ENCODE measurements at regions of chr3 and their contacts with region 1.

Region 1: DNA sequence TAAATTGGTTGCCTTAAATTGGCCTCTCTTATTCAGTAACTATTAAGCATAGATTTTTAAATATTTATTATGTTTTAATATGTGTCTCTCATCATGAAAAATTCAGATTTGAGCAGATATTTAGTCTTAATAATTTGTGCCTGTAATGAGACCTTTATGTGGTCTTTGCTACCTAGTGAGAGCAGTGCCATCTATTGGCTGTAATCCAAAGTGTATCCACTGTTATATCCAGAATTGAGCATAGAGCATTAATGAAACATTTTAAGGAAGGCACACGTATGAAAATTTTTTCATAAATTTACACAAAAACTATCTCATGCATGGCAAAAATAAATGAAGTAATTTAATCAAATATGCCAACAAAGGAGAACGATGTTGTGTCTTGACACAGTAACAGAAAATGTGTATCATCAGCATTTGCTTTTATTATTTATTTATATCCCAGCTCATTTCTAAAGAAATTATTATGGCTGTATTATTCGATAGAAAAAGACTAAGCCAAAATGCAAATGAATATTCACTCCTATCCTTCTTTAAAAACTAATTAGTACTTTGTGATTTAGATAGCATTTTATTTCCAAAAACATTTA is 203.5 kb downstream of the RSRC1 start:
- DNase-seq: peak; percentile 39
- ATAC-seq: peak; percentile 65
- H3K4me3 ChIP-seq: no peak overlapping the region
- H3K27ac ChIP-seq: no peak overlapping the region
- H3K4me1 ChIP-seq: no peaks in the 10 kb centered on the region
- H3K27me3 ChIP-seq: no peaks in the 10 kb centered on the region
- CTCF ChIP-seq: peak; percentile 55 to 67 (median 56); a peak in 5 of 6 replicates
- POLR2A ChIP-seq: no peak
- RAD21 ChIP-seq: peak; percentile 82

Region 2: DNA sequence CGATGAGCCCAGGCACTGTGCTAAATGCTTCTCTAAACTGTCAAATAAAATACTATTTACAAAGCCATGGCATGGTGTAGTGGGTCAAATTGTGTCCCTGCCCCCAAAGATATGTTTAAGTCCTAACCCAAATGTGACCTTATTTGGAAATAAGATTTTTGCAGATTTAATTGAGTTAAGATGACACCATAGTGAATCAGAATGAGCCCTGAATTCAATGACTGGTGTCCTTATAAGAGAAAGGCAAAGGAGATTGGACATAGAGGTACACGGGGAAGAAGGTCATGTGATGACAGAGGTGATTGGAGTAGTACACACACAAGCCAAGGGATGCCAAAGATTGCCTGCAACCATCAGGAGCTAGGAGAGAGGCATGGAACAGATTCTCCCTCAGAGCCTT is 688.6 kb before region 1 on chr3:
- CTCF ChIA-PET with region 1: no interaction called
- POLR2A ChIA-PET with region 1: no interaction called
- RAD21 ChIA-PET with region 1: no interaction called
- intact Hi-C with region 1: loop called (anchors 5 kb)
- DNase-seq: no peak
- ATAC-seq: no peak
- H3K4me3 ChIP-seq: no peak overlapping the region
- H3K27ac ChIP-seq: no peak overlapping the region
- H3K4me1 ChIP-seq: no peaks in the 10 kb centered on the region
- H3K27me3 ChIP-seq: no peaks in the 10 kb centered on the region
- CTCF ChIP-seq: no peak
- POLR2A ChIP-seq: no peak
- RAD21 ChIP-seq: no peak

Region 3: DNA sequence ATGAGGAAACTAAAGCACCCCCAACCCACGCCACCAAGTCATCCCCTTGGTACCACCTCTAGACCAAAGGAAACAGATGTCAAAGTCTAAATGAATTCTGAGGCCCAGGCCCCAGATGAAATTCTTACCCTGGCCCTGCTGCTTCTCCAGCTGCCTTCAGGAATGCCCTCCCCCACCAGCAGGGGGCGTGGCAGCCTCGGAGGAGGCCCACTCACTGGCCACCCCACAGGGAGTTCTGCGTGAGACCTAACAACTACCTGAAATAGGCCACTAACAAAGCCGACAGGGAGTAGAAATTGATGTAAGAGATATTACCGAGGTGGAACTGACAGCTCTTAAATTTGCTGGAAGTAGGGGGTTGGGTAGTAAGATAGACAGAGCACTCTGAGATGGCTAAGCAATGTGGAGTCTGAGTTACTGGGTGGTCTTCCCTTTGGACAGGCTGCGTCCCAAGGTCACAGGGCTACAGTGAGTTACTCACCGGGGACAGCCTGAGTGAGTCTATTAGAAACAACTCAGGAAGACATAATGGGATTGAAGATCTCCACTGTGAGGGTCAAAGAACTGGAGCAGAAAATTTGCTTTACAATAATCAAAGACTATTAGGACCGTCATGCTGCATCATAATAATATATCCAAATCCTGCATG is 448.0 kb before region 1 on chr3:
- CTCF ChIA-PET with region 1: interaction called, 6 read pairs
- POLR2A ChIA-PET with region 1: no interaction called
- RAD21 ChIA-PET with region 1: no interaction called
- intact Hi-C with region 1: loop called (anchors 1 kb)
- DNase-seq: peak; percentile 42
- ATAC-seq: peak; percentile 98
- H3K4me3 ChIP-seq: no peak overlapping the region
- H3K27ac ChIP-seq: no peak overlapping the region
- H3K4me1 ChIP-seq: no peaks in the 10 kb centered on the region
- H3K27me3 ChIP-seq: no peaks in the 10 kb centered on the region
- CTCF ChIP-seq: peak; percentile 72 to 97 (median 95); a peak in 5 of 6 replicates
- POLR2A ChIP-seq: no peak
- RAD21 ChIP-seq: peak; percentile 93

Region 4: GRCh38 chr3:158109804-158110657 is 203.4 kb before region 1 on chr3 and contains the start of gene RSRC1:
- CTCF ChIA-PET with region 1: no interaction called
- POLR2A ChIA-PET with region 1: no interaction called
- RAD21 ChIA-PET with region 1: no interaction called
- intact Hi-C with region 1: loop called (anchors 10 kb)
- DNase-seq: peak; percentile 89
- ATAC-seq: peak; percentile 90
- H3K4me3 ChIP-seq: peak within 1 kb of the TSS; percentile 70 to 84
- H3K27ac ChIP-seq: peak within 1 kb of the TSS; percentile 77
- H3K4me1 ChIP-seq: peaks cover 0 to 27% of the 10 kb centered on the region in 2 experiments; a peak in 2 of 4 replicates
- H3K27me3 ChIP-seq: no peaks in the 10 kb centered on the region
- CTCF ChIP-seq: no peak
- POLR2A ChIP-seq: peak; percentile 95
- RAD21 ChIP-seq: no peak
- total RNA-seq, gene RSRC1: 37.1 TPM

Region 5: DNA sequence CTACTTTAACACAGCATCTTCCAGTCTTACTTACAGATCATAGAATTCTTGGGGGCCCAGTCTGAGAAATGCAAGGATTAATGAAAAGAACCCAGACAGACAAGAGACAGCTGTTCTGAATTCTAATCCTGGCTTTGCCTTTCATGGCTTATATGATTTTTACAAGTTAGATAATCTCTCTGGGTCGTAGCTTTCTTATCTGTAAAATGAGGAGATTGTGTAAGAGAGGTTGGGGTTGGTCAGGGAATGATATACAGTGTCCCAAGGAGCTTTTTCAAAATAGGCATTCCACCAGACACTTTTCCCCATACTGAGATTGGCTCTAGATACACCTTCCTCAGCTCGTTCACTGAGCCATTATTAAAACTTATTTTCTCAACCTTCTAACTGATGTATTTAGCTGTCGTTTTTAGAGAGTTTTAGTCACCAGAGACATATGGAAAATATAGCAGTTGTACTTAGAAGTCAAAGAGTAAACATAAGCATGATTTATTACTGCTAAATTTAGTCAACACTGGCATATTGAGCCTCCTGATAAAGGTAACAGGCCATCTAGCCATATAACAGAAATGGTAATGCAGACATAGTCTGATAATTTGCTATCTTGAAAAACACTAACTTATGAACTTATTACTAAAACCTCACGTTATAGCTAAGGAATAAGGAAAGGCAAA is 94.5 kb after region 1 on chr3:
- CTCF ChIA-PET with region 1: no interaction called
- POLR2A ChIA-PET with region 1: no interaction called
- RAD21 ChIA-PET with region 1: no interaction called
- intact Hi-C with region 1: no loop called
- DNase-seq: no peak
- ATAC-seq: no peak
- H3K4me3 ChIP-seq: no peak overlapping the region
- H3K27ac ChIP-seq: no peak overlapping the region
- H3K4me1 ChIP-seq: no peaks in the 10 kb centered on the region
- H3K27me3 ChIP-seq: no peaks in the 10 kb centered on the region
- CTCF ChIP-seq: no peak
- POLR2A ChIP-seq: no peak
- RAD21 ChIP-seq: no peak

Region 6: GRCh38 chr3:158420654-158421396 is 107.4 kb after region 1 on chr3:
- CTCF ChIA-PET with region 1: no interaction called
- POLR2A ChIA-PET with region 1: no interaction called
- RAD21 ChIA-PET with region 1: no interaction called
- intact Hi-C with region 1: no loop called
- DNase-seq: no peak
- ATAC-seq: no peak
- H3K4me3 ChIP-seq: no peak overlapping the region
- H3K27ac ChIP-seq: no peak overlapping the region
- H3K4me1 ChIP-seq: no peaks in the 10 kb centered on the region
- H3K27me3 ChIP-seq: no peaks in the 10 kb centered on the region
- CTCF ChIP-seq: no peak
- POLR2A ChIP-seq: no peak
- RAD21 ChIP-seq: no peak